ENCODE measurements at regions of chr1 and their contacts with region 1.

Region 1: GRCh38 chr1:27321813-27322577 is at the start of gene TMEM222:
- DNase-seq: peak; percentile 98 to 99 (median 98)
- ATAC-seq: peak; percentile 96 to 99 (median 98)
- H3K4me3 ChIP-seq: peak within 1 kb of the TSS; percentile 68 to 100 (median 80)
- H3K27ac ChIP-seq: peak within 1 kb of the TSS; percentile 84 to 95 (median 90)
- H3K4me1 ChIP-seq: peaks cover 5 to 48% (median 33%) of the 10 kb centered on the region in 12 donors
- H3K27me3 ChIP-seq: peaks cover 0 to 5% (median 0%) of the 10 kb centered on the region in 9 donors
- CTCF ChIP-seq: peak in 9 of 12 donors; percentile 10 to 50 (median 18)
- POLR2A ChIP-seq: peak in 1 of 2 donors; percentile 66
- total RNA-seq, gene TMEM222: 18.1 to 32.5 (median 25.9) TPM

Region 2: GRCh38 chr1:26921540-26922430 is 400.2 kb before region 1 on chr1 and contains the start of gene NUDC:
- intact Hi-C with region 1: no loop called
- DNase-seq: peak; percentile 97 to 98 (median 98)
- ATAC-seq: peak; percentile 99 to 100 (median 99)
- H3K4me3 ChIP-seq: peak within 1 kb of the TSS; percentile 80 to 100 (median 96)
- H3K27ac ChIP-seq: peak within 1 kb of the TSS in 11 of 12 donors; percentile 72 to 94 (median 89)
- H3K4me1 ChIP-seq: peaks cover 0 to 25% (median 17%) of the 10 kb centered on the region in 12 donors
- H3K27me3 ChIP-seq: no peaks in the 10 kb centered on the region
- CTCF ChIP-seq: peak in 1 of 12 donors; percentile 2
- POLR2A ChIP-seq: peak in 1 of 2 donors; percentile 91
- total RNA-seq, gene NUDC: 53.6 to 78.6 (median 57.4) TPM

Region 3: GRCh38 chr1:27349784-27350662 is 28.0 kb after region 1 on chr1:
- intact Hi-C with region 1: loop called in 1 of 10 experiments (anchors 2 kb)
- DNase-seq: peak; percentile 70 to 80 (median 74)
- ATAC-seq: peak in 3 of 4 donors; percentile 52 to 72 (median 60)
- H3K4me3 ChIP-seq: peak overlapping the region; percentile 24 to 61 (median 48)
- H3K27ac ChIP-seq: peak overlapping the region in 2 of 12 donors; percentile 18 to 33
- H3K4me1 ChIP-seq: peaks cover 0 to 31% (median 22%) of the 10 kb centered on the region in 12 donors
- H3K27me3 ChIP-seq: no peaks in the 10 kb centered on the region
- CTCF ChIP-seq: peak in 2 of 12 donors; percentile 9 to 13
- POLR2A ChIP-seq: no peak

Region 4: GRCh38 chr1:27365372-27366112 is 43.5 kb after region 1 on chr1:
- intact Hi-C with region 1: loop called in 4 of 10 experiments (anchors 1 to 5 kb)
- DNase-seq: peak; percentile 91 to 94 (median 92)
- ATAC-seq: peak; percentile 70 to 88 (median 80)
- H3K4me3 ChIP-seq: peak overlapping the region; percentile 70 to 93 (median 81)
- H3K27ac ChIP-seq: peak overlapping the region; percentile 96 to 100 (median 99)
- H3K4me1 ChIP-seq: peaks cover 7 to 58% (median 37%) of the 10 kb centered on the region in 12 donors
- H3K27me3 ChIP-seq: no peaks in the 10 kb centered on the region
- CTCF ChIP-seq: no peak
- POLR2A ChIP-seq: peak in 1 of 2 donors; percentile 32